MCF 10A (cell line): ENCODE measurements at regions of chr16 and their contacts with region 1.

Region 1: DNA sequence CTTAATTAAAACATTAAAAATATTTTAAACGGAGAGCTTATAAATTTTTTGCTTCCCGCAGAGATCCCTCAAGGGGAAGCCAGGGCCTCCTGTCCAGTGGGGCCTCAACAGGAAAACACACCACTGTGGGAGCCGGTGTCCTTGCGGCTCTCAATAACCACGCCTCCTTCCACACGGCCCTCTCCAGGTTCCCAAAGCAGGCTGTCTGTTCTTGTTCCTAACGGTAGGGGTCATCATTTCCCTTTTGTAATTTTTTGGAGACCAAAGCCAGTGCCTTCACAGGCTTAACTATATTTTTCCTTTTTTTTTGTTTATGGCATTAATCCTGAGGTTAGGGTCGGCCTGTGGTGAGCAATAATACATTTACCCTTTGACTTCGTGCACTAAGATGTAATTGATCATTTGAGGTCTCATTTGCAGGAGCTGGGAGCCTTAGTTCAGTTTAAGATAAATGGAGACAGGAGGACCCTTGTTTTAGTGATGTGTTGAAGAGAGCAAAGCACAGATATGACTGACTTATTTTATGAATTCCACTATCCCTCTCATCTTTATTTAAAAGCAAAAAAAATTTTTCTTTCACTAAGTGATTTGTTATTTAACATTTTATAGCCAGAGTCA is 77.5 kb upstream of the N4BP1 start:
- DNase-seq: peak; percentile 78
- H3K4me3 Mint-ChIP-seq: no peak overlapping the region
- H3K27ac Mint-ChIP-seq: no peak overlapping the region
- H3K4me1 Mint-ChIP-seq: no peaks in the 10 kb centered on the region
- H3K27me3 Mint-ChIP-seq: peaks cover 73% of the 10 kb centered on the region
- CTCF ChIP-seq: peak; percentile 80

Region 2: GRCh38 chr16:48676836-48677235 is 10.7 kb before region 1 on chr16:
- CTCF ChIA-PET with region 1: interaction called, 13 read pairs
- POLR2A ChIA-PET with region 1: interaction called, 3 read pairs
- intact Hi-C with region 1: no loop called
- DNase-seq: peak; percentile 68
- H3K4me3 Mint-ChIP-seq: no peak overlapping the region
- H3K27ac Mint-ChIP-seq: no peak overlapping the region
- H3K4me1 Mint-ChIP-seq: no peaks in the 10 kb centered on the region
- H3K27me3 Mint-ChIP-seq: peaks cover 21% of the 10 kb centered on the region
- CTCF ChIP-seq: no peak

Region 3: DNA sequence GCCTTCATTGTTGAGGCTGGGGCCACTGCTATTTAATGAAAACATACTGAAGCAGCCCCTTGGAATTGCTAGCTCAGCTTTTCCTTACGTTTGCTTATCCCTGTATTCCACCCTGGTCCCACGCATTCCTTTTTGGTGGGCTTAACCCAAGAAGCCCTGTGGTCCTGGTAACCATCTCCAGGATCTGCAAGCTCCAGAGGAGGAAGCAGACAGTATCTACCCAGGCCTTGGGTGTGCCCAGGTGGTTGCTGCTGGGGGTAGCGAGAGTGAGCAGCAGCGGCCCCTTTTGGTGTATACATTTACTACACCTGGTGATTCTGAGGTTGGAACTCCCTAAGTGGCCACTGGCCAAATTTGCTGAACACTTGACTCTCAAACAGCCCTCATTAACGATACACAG is 496.4 kb after region 1 on chr16:
- CTCF ChIA-PET with region 1: interaction called, 3 read pairs
- POLR2A ChIA-PET with region 1: no interaction called
- intact Hi-C with region 1: loop called (anchors 5 kb)
- DNase-seq: peak; percentile 47
- H3K4me3 Mint-ChIP-seq: no peak overlapping the region
- H3K27ac Mint-ChIP-seq: no peak overlapping the region
- H3K4me1 Mint-ChIP-seq: no peaks in the 10 kb centered on the region
- H3K27me3 Mint-ChIP-seq: no peaks in the 10 kb centered on the region
- CTCF ChIP-seq: peak; percentile 46

Region 4: GRCh38 chr16:49369651-49370611 is 682.4 kb after region 1 on chr16:
- CTCF ChIA-PET with region 1: interaction called, 12 read pairs
- POLR2A ChIA-PET with region 1: no interaction called
- intact Hi-C with region 1: no loop called
- DNase-seq: no peak
- H3K4me3 Mint-ChIP-seq: no peak overlapping the region
- H3K27ac Mint-ChIP-seq: no peak overlapping the region
- H3K4me1 Mint-ChIP-seq: no peaks in the 10 kb centered on the region
- H3K27me3 Mint-ChIP-seq: peaks cover 16% of the 10 kb centered on the region
- CTCF ChIP-seq: no peak

Region 5: GRCh38 chr16:49407873-49408550 is 720.5 kb after region 1 on chr16:
- CTCF ChIA-PET with region 1: no interaction called
- POLR2A ChIA-PET with region 1: no interaction called
- intact Hi-C with region 1: loop called (anchors 5 kb)
- DNase-seq: peak; percentile 79
- H3K4me3 Mint-ChIP-seq: no peak overlapping the region
- H3K27ac Mint-ChIP-seq: no peak overlapping the region
- H3K4me1 Mint-ChIP-seq: no peaks in the 10 kb centered on the region
- H3K27me3 Mint-ChIP-seq: no peaks in the 10 kb centered on the region
- CTCF ChIP-seq: peak; percentile 91